ENCODE measurements at regions of chr2 and their contacts with region 1.

Region 1: GRCh38 chr2:114472246-114472645 is 29.8 kb downstream of the DPP10 start:
- DNase-seq: no peak
- H3K4me3 ChIP-seq: no peak overlapping the region
- H3K27ac ChIP-seq: no peak overlapping the region
- H3K4me1 ChIP-seq: no peaks in the 10 kb centered on the region
- H3K27me3 ChIP-seq: 0 out of 2 replicates have a peak, but pooled peaks cover 10% of the 10 kb centered on the region
- CTCF ChIP-seq: no peak

Region 2: DNA sequence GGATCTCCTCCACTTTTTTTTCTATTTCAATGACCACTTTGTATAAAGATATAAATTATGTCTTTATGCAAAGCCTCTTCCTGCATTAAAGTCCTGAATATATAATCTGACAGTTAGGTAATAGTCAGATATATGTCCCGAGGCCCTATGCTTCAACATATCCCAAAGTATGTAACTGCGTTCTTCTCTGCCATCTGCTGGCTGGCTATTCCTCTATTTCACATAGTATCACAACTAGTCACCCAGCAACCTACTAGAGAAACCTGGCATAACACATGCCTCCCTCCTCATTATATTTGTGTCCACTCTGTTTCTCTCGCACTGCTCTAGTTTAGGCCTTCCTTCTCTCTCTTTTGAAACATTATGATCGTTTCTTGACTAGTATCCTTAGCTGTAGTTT is 611.0 kb after region 1 on chr2:
- CTCF ChIA-PET with region 1: no interaction called
- POLR2A ChIA-PET with region 1: no interaction called
- intact Hi-C with region 1: loop called (anchors 10 kb)
- DNase-seq: no peak
- H3K4me3 ChIP-seq: no peak overlapping the region
- H3K27ac ChIP-seq: no peak overlapping the region
- H3K4me1 ChIP-seq: no peaks in the 10 kb centered on the region
- H3K27me3 ChIP-seq: no peaks in the 10 kb centered on the region
- CTCF ChIP-seq: no peak; the same call in 1 of the 2 replicates

Measured in PC-9 (cell line).